SK-MEL-5 (cell line): ENCODE measurements at regions of chr10 and their contacts with region 1.

Region 1: GRCh38 chr10:11113156-11113555 is 95.5 kb downstream of the CELF2 start:
- DNase-seq: peak; percentile 15

Region 2: GRCh38 chr10:11209830-11210181 is 96.7 kb after region 1 on chr10:
- in situ Hi-C with region 1: loop called (anchors 10 kb)
- DNase-seq: no peak